Naive thymus-derived CD4-positive, alpha-beta T cell (primary cell): ENCODE measurements at regions of chr9 and their contacts with region 1.

Region 1: DNA sequence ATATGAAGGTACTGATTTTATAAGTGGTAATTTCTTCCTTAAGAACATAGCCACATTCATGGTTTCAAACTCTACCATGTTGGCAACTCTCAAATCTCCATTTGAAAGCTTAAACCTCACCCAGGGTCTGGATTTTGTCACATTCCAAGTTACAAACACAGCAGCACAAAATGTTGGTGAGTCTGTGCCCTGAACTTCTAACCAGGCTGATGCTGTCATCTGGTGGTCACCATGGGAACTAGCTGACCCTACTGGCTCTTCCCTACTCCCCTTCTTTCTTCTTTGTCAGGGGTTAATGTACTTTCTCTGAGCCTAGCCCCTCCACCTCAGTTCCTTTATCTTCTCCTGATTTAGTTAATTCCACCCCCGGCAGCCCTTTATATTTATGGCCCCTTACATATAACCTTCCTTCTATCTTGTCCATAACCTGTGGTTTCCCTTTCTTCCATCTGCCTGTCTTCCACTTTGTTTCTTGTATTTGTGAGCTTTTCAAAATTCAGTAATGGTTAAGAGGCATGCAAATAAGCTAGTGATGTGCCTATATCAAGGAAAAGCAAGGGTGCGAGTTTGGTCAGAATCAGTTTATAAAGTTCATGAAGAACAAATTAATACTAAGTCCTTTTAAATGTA is 35.9 kb downstream of the TGFBR1 start:
- DNase-seq: peak in 8 of 9 donors; percentile 30 to 67 (median 54)
- ATAC-seq: peak; percentile 84
- H3K4me3 ChIP-seq: no peak overlapping the region
- H3K4me3 Mint-ChIP-seq: peak overlapping the region in 7 of 10 donors; percentile 1 to 32 (median 6)
- H3K27ac ChIP-seq: no peak overlapping the region
- H3K27ac Mint-ChIP-seq: peak overlapping the region; percentile 24 to 78 (median 66)
- H3K4me1 ChIP-seq: peaks cover 10 to 28% of the 10 kb centered on the region in 2 donors
- H3K4me1 Mint-ChIP-seq: peaks cover 35 to 56% (median 50%) of the 10 kb centered on the region in 7 donors
- H3K27me3 ChIP-seq: no peaks in the 10 kb centered on the region
- H3K27me3 Mint-ChIP-seq: no peaks in the 10 kb centered on the region

Region 2: DNA sequence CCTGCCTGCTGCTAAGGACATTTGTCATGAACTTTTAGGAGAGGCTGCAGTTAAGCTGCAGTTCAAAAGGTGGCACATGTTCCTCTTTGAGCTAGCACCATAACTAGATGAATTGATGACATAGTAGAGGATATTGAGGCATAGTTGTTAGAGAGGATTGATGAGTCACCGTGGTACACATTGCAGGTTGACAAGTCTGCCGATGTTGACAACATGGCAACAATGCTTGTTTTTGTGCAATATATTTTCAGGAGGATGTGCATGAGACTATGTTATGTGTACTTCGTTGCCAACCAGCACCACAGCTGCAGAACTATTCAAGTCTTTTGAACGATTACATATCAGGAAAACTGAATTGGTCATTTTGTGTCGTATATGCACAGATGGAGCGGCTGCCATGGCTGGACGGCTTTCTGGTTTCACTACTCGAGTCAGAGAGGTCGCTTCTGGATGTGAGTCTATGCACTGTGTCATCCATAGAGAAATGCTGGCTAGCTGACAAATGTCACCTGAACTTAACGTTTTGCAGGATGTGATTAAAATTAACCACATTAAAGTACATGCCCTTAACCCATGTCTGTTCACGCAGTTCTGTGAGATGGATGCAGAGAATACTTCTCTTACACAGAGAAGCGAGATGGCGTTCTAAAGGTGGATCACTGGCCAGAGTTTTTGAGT is 1133.4 kb before region 1 on chr9:
- CTCF ChIA-PET with region 1: no interaction called
- POLR2A ChIA-PET with region 1: no interaction called
- intact Hi-C with region 1: no loop called
- DNase-seq: no peak
- ATAC-seq: peak; percentile 38
- H3K4me3 ChIP-seq: no peak overlapping the region
- H3K4me3 Mint-ChIP-seq: no peak overlapping the region
- H3K27ac ChIP-seq: no peak overlapping the region
- H3K27ac Mint-ChIP-seq: peak overlapping the region in 2 of 9 donors; percentile 46 to 53
- H3K4me1 ChIP-seq: peaks cover 0 to 2% of the 10 kb centered on the region in 2 donors
- H3K4me1 Mint-ChIP-seq: peaks cover 4 to 51% (median 40%) of the 10 kb centered on the region in 7 donors
- H3K27me3 ChIP-seq: no peaks in the 10 kb centered on the region
- H3K27me3 Mint-ChIP-seq: no peaks in the 10 kb centered on the region

Region 3: GRCh38 chr9:98642661-98643312 is 498.0 kb before region 1 on chr9:
- CTCF ChIA-PET with region 1: no interaction called
- POLR2A ChIA-PET with region 1: no interaction called
- intact Hi-C with region 1: no loop called
- DNase-seq: no peak
- ATAC-seq: no peak
- H3K4me3 ChIP-seq: no peak overlapping the region
- H3K4me3 Mint-ChIP-seq: no peak overlapping the region
- H3K27ac ChIP-seq: no peak overlapping the region
- H3K27ac Mint-ChIP-seq: no peak overlapping the region
- H3K4me1 ChIP-seq: no peaks in the 10 kb centered on the region
- H3K4me1 Mint-ChIP-seq: no peaks in the 10 kb centered on the region
- H3K27me3 ChIP-seq: no peaks in the 10 kb centered on the region
- H3K27me3 Mint-ChIP-seq: peaks cover 8 to 38% (median 31%) of the 10 kb centered on the region in 5 donors

Region 4: GRCh38 chr9:98848450-98849149 is 292.2 kb before region 1 on chr9:
- CTCF ChIA-PET with region 1: interaction called, 24 read pairs
- POLR2A ChIA-PET with region 1: no interaction called
- intact Hi-C with region 1: loop called (anchors 1 kb)
- DNase-seq: peak; percentile 26 to 74 (median 55)
- ATAC-seq: peak; percentile 95
- H3K4me3 ChIP-seq: no peak overlapping the region
- H3K4me3 Mint-ChIP-seq: no peak overlapping the region
- H3K27ac ChIP-seq: no peak overlapping the region
- H3K27ac Mint-ChIP-seq: peak overlapping the region in 4 of 9 donors; percentile 3 to 64 (median 38)
- H3K4me1 ChIP-seq: no peaks in the 10 kb centered on the region
- H3K4me1 Mint-ChIP-seq: peaks cover 0 to 15% (median 4%) of the 10 kb centered on the region in 7 donors
- H3K27me3 ChIP-seq: no peaks in the 10 kb centered on the region
- H3K27me3 Mint-ChIP-seq: no peaks in the 10 kb centered on the region

Region 5: DNA sequence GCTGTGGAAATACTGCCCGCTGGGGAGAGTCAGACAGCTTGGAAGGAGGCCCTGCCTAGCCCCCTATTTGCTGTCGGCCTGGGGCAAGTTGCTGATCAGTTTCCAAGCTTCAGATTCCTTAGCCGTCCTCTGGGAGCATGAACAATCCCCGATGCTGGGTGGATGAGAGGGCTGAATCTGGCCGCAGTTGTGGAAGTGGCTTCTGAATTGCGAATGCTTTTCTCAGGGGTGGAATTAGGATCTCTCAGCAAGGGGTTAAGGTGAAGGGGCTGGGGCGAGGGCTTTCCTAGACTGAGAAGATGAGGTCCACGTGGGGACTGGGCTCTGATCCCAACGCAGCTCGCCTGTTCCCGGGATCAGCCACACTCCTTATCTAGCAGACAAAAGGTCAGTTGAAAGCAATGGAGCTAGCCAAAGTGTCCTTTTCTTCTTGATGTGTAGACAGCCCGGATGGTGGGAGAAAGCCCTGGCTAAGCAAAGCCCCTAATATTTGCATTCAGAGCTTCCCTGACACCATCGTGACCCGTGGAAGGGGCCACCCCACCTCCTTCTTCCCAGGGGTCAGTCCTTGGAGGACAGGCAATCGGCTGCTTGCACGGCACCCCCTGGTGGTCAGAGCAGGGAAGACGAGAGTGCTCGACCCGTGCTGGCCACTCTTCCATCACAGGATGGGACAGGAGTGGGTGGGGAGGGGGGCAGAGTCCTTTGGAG is 142.2 kb before region 1 on chr9:
- CTCF ChIA-PET with region 1: interaction called, 155 read pairs
- POLR2A ChIA-PET with region 1: interaction called, 12 read pairs
- intact Hi-C with region 1: loop called (anchors 1 kb)
- DNase-seq: peak in 8 of 9 donors; percentile 9 to 73 (median 29)
- ATAC-seq: peak; percentile 75
- H3K4me3 ChIP-seq: no peak overlapping the region
- H3K4me3 Mint-ChIP-seq: no peak overlapping the region
- H3K27ac ChIP-seq: no peak overlapping the region
- H3K27ac Mint-ChIP-seq: no peak overlapping the region
- H3K4me1 ChIP-seq: peaks cover 4 to 14% of the 10 kb centered on the region in 2 donors
- H3K4me1 Mint-ChIP-seq: peaks cover 17 to 45% (median 21%) of the 10 kb centered on the region in 7 donors
- H3K27me3 ChIP-seq: no peaks in the 10 kb centered on the region
- H3K27me3 Mint-ChIP-seq: peaks cover 0 to 32% (median 0%) of the 10 kb centered on the region in 5 donors

Region 6: DNA sequence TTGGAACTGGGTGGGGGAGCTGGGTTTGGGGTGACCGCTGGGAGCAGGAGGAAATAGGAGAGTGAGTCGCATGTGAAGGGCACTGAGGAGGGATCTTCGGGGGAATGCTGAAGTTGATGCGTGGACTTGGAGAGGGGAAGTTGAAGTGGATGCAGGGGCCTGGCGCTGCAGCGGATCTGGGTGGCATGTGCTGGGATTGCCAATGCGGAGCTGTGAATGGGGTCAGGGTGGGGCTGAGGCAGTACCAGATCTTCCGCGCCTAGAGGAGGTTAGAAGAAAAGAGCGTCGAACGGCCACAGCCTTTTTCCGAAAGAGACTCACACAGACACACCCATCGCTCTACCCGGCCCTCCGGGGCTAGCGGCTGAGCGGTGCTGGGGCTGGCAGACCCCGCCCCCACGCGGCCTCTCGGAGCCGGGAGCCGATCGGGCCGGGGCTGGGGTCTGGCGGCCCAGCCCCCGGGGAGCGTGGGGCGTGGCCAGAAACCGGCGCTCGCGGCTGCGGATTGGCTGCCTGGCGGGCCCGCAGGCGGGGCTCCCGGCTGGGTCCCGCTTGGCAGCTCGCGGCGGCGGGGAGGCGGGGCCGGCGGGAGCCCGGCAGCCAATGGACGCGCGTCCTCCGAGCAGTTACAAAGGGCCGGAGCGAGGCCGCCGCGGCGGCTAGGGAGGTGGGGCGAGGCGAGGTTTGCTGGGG is 36.2 kb before region 1 on chr9 and contains the start of gene TGFBR1:
- CTCF ChIA-PET with region 1: interaction called, 47 read pairs
- POLR2A ChIA-PET with region 1: interaction called, 74 read pairs
- intact Hi-C with region 1: loop called (anchors 1 to 5 kb)
- DNase-seq: peak; percentile 87 to 98 (median 89)
- ATAC-seq: peak; percentile 91
- H3K4me3 ChIP-seq: peak within 1 kb of the TSS; percentile 73
- H3K4me3 Mint-ChIP-seq: peak within 1 kb of the TSS; percentile 90 to 97 (median 94)
- H3K27ac ChIP-seq: peak within 1 kb of the TSS; percentile 74
- H3K27ac Mint-ChIP-seq: peak within 1 kb of the TSS; percentile 78 to 99 (median 95)
- H3K4me1 ChIP-seq: peaks cover 43 to 49% of the 10 kb centered on the region in 2 donors
- H3K4me1 Mint-ChIP-seq: peaks cover 36 to 65% (median 59%) of the 10 kb centered on the region in 7 donors
- H3K27me3 ChIP-seq: no peaks in the 10 kb centered on the region
- H3K27me3 Mint-ChIP-seq: no peaks in the 10 kb centered on the region
- total RNA-seq, gene TGFBR1: 20.6 to 95.5 (median 29.5) TPM

Region 7: DNA sequence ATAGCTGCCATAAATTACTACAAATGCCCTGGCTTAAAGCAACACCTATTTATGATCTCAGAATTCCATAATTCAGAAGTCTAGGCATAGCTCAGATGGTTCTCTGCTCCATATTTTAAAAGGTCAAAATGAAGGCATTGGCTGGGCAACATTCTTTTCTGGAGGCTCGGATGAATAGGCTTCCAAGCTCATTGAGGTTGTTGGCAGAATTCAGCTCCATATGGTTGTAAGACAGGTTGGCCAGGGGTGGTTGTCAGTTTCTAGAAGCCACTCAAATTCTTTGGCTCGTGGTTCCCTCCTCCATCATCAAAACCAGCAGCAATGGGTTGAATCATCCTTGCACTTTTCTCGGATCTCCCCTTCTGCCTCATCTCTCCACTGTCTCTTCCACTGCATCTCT is 13.6 kb after region 1 on chr9:
- CTCF ChIA-PET with region 1: interaction called, 7 read pairs
- POLR2A ChIA-PET with region 1: interaction called, 8 read pairs
- intact Hi-C with region 1: loop called in 1 of 2 experiments (anchors 2 kb)
- DNase-seq: no peak
- ATAC-seq: no peak
- H3K4me3 ChIP-seq: no peak overlapping the region
- H3K4me3 Mint-ChIP-seq: no peak overlapping the region
- H3K27ac ChIP-seq: no peak overlapping the region
- H3K27ac Mint-ChIP-seq: peak overlapping the region in 2 of 9 donors; percentile 2 to 28
- H3K4me1 ChIP-seq: peaks cover 6 to 15% of the 10 kb centered on the region in 2 donors
- H3K4me1 Mint-ChIP-seq: peaks cover 13 to 39% (median 20%) of the 10 kb centered on the region in 7 donors
- H3K27me3 ChIP-seq: no peaks in the 10 kb centered on the region
- H3K27me3 Mint-ChIP-seq: peaks cover 0 to 25% (median under 1%) of the 10 kb centered on the region in 5 donors